K562 (cell line): ENCODE measurements at regions of chr7 and their contacts with region 1.

Region 1: GRCh38 chr7:142853739-142854371 is 1.0 kb upstream of the EPHB6 start:
- DNase-seq: peak; percentile 74 to 88 (median 80)
- ATAC-seq: peak; percentile 82
- H3K4me3 ChIP-seq: peak overlapping the region; percentile 70
- H3K27ac ChIP-seq: no peak overlapping the region; the same call in 2 of the 3 replicates
- H3K4me1 ChIP-seq: peaks cover 7 to 16% of the 10 kb centered on the region in 2 experiments; a peak in 3 of 5 replicates
- H3K27me3 ChIP-seq: peaks cover 4 to 26% of the 10 kb centered on the region in 2 experiments; a peak in 3 of 5 replicates
- CTCF ChIP-seq: peak; percentile 92 to 95 (median 93)
- EP300 ChIP-seq: no peak
- POLR2A ChIP-seq: no peak
- RAD21 ChIP-seq: peak; percentile 89 to 94

Region 2: DNA sequence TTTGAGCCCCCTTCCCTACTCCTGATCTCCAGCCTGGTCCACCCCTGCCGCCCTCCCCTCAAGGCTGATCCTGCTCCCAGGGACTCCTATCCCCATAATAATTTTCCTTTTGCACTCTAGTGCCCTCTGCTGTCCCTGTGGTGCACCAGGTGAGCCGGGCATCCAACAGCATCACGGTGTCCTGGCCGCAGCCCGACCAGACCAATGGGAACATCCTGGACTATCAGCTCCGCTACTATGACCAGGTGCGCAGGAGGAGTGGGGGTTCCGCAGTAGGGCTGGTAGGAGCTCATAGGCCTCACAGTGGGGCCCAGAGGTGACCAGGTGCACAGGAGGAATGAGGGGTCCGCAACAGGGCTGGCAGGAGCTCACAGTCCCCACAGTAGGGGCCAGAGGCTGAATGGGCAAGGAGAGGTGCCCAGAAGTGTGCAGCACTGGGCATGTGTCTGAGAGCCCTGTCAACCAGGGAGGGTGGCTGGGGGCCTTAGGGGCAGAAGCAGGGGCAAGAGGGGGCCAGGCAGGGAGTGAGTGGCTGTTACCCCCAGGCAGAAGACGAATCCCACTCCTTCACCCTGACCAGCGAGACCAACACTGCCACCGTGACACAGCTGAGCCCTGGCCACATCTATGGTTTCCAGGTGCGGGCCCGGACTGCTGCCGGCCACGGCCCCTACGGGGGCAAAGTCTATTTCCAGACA is 12.7 kb after region 1 on chr7:
- CTCF ChIA-PET with region 1: interaction called, 15 read pairs
- POLR2A ChIA-PET with region 1: interaction called, 3 read pairs
- in situ Hi-C with region 1: no loop called
- intact Hi-C with region 1: loop called (anchors 1 kb)
- DNase-seq: peak; percentile 70 to 78 (median 75)
- ATAC-seq: peak; percentile 87
- H3K4me3 ChIP-seq: no peak overlapping the region
- H3K27ac ChIP-seq: no peak overlapping the region
- H3K4me1 ChIP-seq: peaks cover 0 to 30% of the 10 kb centered on the region in 2 experiments; a peak in 1 of 5 replicates
- H3K27me3 ChIP-seq: peaks cover 11 to 64% of the 10 kb centered on the region in 2 experiments; a peak in 4 of 5 replicates
- CTCF ChIP-seq: peak; percentile 82 to 88 (median 85)
- EP300 ChIP-seq: no peak
- POLR2A ChIP-seq: no peak
- RAD21 ChIP-seq: peak; percentile 70 to 72

Region 3: GRCh38 chr7:143222782-143223181 is 368.9 kb after region 1 on chr7:
- CTCF ChIA-PET with region 1: no interaction called
- POLR2A ChIA-PET with region 1: no interaction called
- in situ Hi-C with region 1: loop called (anchors 5 kb)
- intact Hi-C with region 1: no loop called
- DNase-seq: no peak
- ATAC-seq: peak; percentile 64
- H3K4me3 ChIP-seq: no peak overlapping the region
- H3K27ac ChIP-seq: no peak overlapping the region
- H3K4me1 ChIP-seq: no peaks in the 10 kb centered on the region
- H3K27me3 ChIP-seq: peaks cover 28 to 43% of the 10 kb centered on the region in 2 experiments; a peak in 4 of 5 replicates
- CTCF ChIP-seq: no peak
- EP300 ChIP-seq: no peak
- POLR2A ChIP-seq: no peak
- RAD21 ChIP-seq: no peak